Left colon (tissue), 2 donors: ENCODE measurements at regions of chr4 and their contacts with region 1.

Region 1: DNA sequence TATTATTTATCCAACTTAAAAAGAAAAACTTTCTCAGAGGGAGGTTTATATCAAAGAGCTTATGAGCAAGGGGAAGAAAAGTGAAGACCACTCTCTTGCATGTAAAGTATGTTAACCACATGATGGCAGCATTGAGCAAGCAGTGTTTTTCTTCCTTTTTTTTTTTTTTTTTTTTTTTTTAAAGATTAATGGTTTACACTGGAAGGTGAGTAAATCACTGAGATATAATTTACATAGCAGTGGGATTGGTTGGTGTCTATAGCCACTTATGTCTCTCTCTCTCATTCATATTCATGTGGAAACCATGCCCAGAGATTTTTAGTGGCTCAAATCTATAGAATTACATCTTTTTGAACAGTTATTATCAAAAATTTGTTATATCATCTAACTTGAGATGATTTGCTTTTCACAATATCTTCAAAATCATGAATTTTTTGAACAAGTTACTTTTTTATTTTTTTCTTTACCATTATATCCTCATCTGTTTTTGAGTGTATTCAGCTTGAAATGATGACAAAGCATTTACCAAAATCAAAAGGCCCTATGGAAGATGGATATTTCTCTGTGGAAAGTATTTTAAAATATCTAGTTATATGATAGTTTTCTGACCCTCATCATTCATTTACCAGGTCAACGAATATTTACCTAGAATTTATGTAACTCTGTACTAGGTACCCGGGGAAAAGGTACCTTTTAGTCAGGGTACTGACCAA is 31.6 kb downstream of the MTHFD2L start:
- DNase-seq: no peak
- ATAC-seq: peak; percentile 81

Region 2: DNA sequence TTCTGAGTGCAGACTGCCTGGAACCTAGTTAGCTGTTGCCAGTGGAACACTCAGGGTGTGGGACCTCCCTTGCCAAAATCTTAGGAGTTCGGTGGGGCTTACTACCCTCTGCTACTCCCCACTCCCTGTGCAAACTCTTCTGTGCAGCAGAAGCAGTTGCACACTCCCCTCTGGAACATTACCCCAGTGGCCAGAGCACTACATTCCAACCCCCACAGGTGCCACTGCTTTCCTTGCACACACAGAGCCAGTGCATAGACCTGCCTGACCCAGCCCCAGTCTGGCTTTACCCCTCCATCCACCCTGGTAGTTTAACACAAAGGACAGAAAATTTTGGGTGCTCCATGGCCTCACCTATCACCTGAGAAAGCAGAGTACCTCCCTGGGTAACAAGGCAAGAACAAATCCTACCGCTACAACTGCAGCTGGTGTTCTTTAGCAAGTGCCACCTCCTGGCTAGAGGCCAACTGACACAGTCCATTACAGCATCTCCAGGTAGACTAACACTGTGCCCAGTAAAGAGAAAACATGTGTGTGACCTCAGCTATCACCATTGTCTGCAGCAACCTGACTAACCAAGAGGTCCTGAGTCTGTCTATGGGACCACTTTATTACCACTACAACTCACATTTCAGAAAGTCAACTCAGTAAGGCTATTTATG is 557.8 kb before region 1 on chr4:
- intact Hi-C with region 1: no loop called
- DNase-seq: peak in 1 of 2 donors; percentile 36
- ATAC-seq: peak; percentile 58

Region 3: DNA sequence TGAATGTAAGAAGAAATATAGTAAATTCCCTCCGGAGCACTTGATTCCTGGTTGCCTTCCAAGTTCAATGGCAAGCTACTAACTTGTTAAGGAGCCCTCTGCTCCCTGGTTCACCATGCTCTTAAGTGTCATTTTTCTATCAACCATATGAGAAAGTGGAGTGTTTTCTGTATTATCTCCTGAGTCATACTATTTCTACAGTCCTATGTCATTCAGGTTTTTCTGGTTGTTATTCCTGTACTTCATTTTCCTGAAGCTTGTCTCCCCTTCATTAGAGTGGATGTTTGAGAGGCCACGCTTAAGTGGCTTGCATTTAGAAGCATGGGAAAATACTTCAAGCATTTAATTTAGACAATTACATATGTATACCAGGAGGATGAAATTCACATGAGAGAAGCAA is 104.1 kb after region 1 on chr4:
- intact Hi-C with region 1: no loop called
- DNase-seq: no peak
- ATAC-seq: no peak

Region 4: DNA sequence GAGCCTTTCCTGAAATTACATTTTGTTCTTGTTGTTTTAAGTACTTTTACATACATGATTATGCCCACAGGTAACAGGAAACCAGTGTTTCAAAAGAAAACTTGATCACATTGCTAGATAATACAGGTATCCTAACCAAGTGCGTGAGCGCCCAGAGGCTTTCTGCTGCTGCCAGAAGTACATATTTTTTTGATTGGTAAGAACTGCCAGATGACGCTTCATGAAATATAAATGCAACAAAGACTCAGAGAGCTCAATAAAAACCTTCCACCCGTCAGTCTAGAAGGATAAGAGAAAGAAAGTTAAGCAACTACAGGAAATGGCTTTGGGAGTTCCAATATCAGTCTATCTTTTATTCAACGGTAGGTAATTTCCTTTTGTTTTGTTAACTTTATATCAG is 118.7 kb after region 1 on chr4 and contains the start of gene EPGN:
- intact Hi-C with region 1: loop called in 1 of 2 experiments (anchors 10 kb)
- DNase-seq: no peak
- ATAC-seq: no peak
- total RNA-seq, gene EPGN: not detected

Region 5: GRCh38 chr4:74675673-74676279 is 486.3 kb after region 1 on chr4:
- intact Hi-C with region 1: loop called in 1 of 2 experiments (anchors 10 kb)
- DNase-seq: no peak
- ATAC-seq: peak; percentile 90